ENCODE measurements at regions of chr7 and their contacts with region 1.

Region 1: DNA sequence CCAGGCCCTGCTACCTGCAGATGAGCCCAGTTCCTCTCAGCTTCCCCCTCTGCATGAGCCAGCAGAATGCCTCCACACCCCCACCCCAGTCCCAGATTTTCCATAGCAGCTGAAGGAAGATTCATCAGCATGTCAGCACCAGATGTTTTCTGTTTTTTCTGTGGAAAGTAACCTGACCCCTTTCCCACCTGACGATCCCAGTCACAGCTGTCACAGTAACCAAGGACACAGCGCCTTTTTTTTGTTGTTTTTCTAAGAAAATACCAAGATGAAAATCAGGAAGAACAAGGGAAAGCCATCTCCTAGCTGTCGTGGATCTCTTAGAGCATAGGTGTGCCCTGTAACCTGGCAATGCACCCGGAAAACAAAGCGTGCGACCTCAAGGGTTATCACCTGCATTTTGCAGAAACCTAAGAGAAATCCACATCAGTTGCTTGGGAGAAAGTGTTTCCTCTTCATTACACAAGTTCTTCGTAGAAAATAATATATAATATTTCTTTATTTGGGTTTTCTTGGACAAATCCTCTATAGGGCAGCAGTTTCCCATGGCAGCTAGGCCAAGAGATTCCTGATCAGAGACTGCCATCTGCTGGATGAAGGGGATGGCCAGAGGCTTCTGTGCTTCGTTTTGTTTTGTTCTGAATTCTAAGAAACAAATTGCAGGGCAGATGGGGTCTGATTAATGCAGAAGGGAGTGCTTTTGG is 401.9 kb downstream of the TNS3 start:
- DNase-seq: no peak
- ATAC-seq: peak; percentile 87
- H3K4me3 ChIP-seq: no peak overlapping the region
- H3K27ac ChIP-seq: no peak overlapping the region
- H3K4me1 ChIP-seq: no peaks in the 10 kb centered on the region
- H3K27me3 ChIP-seq: no peaks in the 10 kb centered on the region
- CTCF ChIP-seq: peak; percentile 55 to 80 (median 58)
- EP300 ChIP-seq: no peak
- POLR2A ChIP-seq: no peak
- RAD21 ChIP-seq: peak; percentile 71

Region 2: DNA sequence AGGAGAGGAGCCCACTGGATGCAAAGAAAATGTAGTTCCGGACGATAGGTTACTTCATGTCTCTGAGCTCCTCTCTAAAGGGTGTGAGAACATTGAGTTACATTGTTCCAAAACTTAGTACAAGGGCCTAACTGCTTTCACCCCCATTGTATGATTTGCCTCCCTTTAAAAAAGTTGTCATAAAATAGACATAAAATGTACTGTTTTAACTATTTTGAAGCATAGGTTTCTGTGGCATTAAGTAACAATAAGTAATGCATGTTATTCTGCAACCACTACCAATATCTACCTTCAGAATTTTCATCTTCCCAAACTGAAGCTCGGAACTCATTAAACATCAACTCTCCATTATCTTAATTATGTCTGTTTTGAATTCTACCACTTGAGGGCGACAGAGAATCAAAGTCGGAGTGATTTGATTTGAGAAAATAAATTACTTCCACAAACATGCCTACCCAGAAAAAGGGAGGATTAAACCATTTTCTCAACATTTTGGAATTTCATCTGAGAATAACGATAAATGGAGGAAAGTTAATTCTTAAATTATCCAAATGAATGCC is 1289.0 kb before region 1 on chr7:
- CTCF ChIA-PET with region 1: interaction called, 10 read pairs
- POLR2A ChIA-PET with region 1: no interaction called
- RAD21 ChIA-PET with region 1: interaction called, 3 read pairs
- SMC1A ChIA-PET with region 1: interaction called, 3 read pairs
- in situ Hi-C with region 1: no loop called
- intact Hi-C with region 1: loop called (anchors 2 kb)
- DNase-seq: no peak
- ATAC-seq: peak; percentile 31; the same call in 1 of the 3 replicates
- H3K4me3 ChIP-seq: no peak overlapping the region
- H3K27ac ChIP-seq: no peak overlapping the region
- H3K4me1 ChIP-seq: no peaks in the 10 kb centered on the region
- H3K27me3 ChIP-seq: peaks cover 0 to 14% of the 10 kb centered on the region in 2 experiments
- CTCF ChIP-seq: peak; percentile 23 to 62 (median 51); a peak in 5 of 6 replicates
- EP300 ChIP-seq: no peak
- POLR2A ChIP-seq: no peak
- RAD21 ChIP-seq: peak; percentile 65

Region 3: GRCh38 chr7:46945328-46945727 is 234.6 kb before region 1 on chr7:
- CTCF ChIA-PET with region 1: no interaction called
- POLR2A ChIA-PET with region 1: no interaction called
- RAD21 ChIA-PET with region 1: no interaction called
- SMC1A ChIA-PET with region 1: no interaction called
- in situ Hi-C with region 1: no loop called
- intact Hi-C with region 1: loop called (anchors 10 kb)
- DNase-seq: no peak
- ATAC-seq: no peak
- H3K4me3 ChIP-seq: no peak overlapping the region
- H3K27ac ChIP-seq: no peak overlapping the region
- H3K4me1 ChIP-seq: no peaks in the 10 kb centered on the region
- H3K27me3 ChIP-seq: no peaks in the 10 kb centered on the region
- CTCF ChIP-seq: no peak
- EP300 ChIP-seq: no peak
- POLR2A ChIP-seq: no peak
- RAD21 ChIP-seq: no peak

Region 4: GRCh38 chr7:47254081-47255006 is 74.4 kb after region 1 on chr7:
- CTCF ChIA-PET with region 1: interaction called, 10 read pairs
- POLR2A ChIA-PET with region 1: interaction called, 3 read pairs
- RAD21 ChIA-PET with region 1: no interaction called
- SMC1A ChIA-PET with region 1: no interaction called
- in situ Hi-C with region 1: no loop called
- intact Hi-C with region 1: loop called (anchors 5 kb)
- DNase-seq: no peak
- ATAC-seq: peak; percentile 97
- H3K4me3 ChIP-seq: peak overlapping the region; percentile 27; the same call in 1 of the 2 replicates
- H3K27ac ChIP-seq: no peak overlapping the region
- H3K4me1 ChIP-seq: no peaks in the 10 kb centered on the region
- H3K27me3 ChIP-seq: peaks cover 0 to 4% of the 10 kb centered on the region in 2 experiments; a peak in 2 of 4 replicates
- CTCF ChIP-seq: peak; percentile 63 to 78 (median 65); a peak in 5 of 6 replicates
- EP300 ChIP-seq: no peak
- POLR2A ChIP-seq: no peak
- RAD21 ChIP-seq: peak; percentile 38

Region 5: GRCh38 chr7:47266131-47266706 is 86.3 kb after region 1 on chr7:
- CTCF ChIA-PET with region 1: no interaction called
- POLR2A ChIA-PET with region 1: no interaction called
- RAD21 ChIA-PET with region 1: no interaction called
- SMC1A ChIA-PET with region 1: no interaction called
- in situ Hi-C with region 1: no loop called
- intact Hi-C with region 1: no loop called
- DNase-seq: peak; percentile 12
- ATAC-seq: peak; percentile 89
- H3K4me3 ChIP-seq: no peak overlapping the region
- H3K27ac ChIP-seq: no peak overlapping the region
- H3K4me1 ChIP-seq: no peaks in the 10 kb centered on the region
- H3K27me3 ChIP-seq: no peaks in the 10 kb centered on the region
- CTCF ChIP-seq: peak; percentile 87 to 92 (median 90)
- EP300 ChIP-seq: no peak
- POLR2A ChIP-seq: no peak
- RAD21 ChIP-seq: peak; percentile 97

Region 6: DNA sequence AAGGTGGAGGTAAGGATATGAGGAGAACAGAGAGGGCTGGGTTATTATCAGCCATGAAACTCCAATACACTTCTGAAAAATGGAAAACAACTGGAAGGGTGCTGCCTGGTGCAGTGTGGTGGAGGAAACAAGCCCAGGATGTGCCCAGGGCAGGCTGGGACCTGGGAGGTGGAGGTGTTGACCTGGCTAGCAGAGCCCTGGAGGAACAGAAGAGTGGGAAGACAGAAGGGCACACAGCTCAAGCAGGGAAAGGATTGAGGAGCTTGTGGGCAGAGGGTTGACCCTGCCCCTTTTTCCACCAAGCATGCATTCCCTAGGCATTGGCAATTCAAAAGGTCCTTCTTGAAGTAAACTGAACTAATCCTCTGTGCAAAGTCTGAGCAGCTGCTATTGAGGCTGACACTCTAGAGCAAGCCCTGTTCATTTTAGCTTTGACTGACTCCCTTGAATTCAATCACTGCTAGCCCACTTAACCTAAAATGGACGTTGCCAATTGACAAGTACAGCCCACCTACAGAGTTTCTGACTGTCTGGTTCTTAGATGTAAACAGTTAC is 518.3 kb after region 1 on chr7:
- CTCF ChIA-PET with region 1: no interaction called
- POLR2A ChIA-PET with region 1: no interaction called
- RAD21 ChIA-PET with region 1: no interaction called
- SMC1A ChIA-PET with region 1: no interaction called
- in situ Hi-C with region 1: no loop called
- intact Hi-C with region 1: no loop called
- DNase-seq: no peak
- ATAC-seq: no peak
- H3K4me3 ChIP-seq: no peak overlapping the region
- H3K27ac ChIP-seq: no peak overlapping the region
- H3K4me1 ChIP-seq: no peaks in the 10 kb centered on the region
- H3K27me3 ChIP-seq: no peaks in the 10 kb centered on the region
- CTCF ChIP-seq: no peak
- EP300 ChIP-seq: no peak
- POLR2A ChIP-seq: no peak
- RAD21 ChIP-seq: no peak

Region 7: GRCh38 chr7:47738563-47739166 is 558.7 kb after region 1 on chr7:
- CTCF ChIA-PET with region 1: no interaction called
- POLR2A ChIA-PET with region 1: no interaction called
- RAD21 ChIA-PET with region 1: no interaction called
- SMC1A ChIA-PET with region 1: no interaction called
- in situ Hi-C with region 1: no loop called
- intact Hi-C with region 1: no loop called
- DNase-seq: no peak
- ATAC-seq: peak; percentile 44; the same call in 2 of the 3 replicates
- H3K4me3 ChIP-seq: no peak overlapping the region
- H3K27ac ChIP-seq: no peak overlapping the region
- H3K4me1 ChIP-seq: no peaks in the 10 kb centered on the region
- H3K27me3 ChIP-seq: peaks cover 0 to 8% of the 10 kb centered on the region in 2 experiments; a peak in 2 of 4 replicates
- CTCF ChIP-seq: no peak
- EP300 ChIP-seq: no peak
- POLR2A ChIP-seq: no peak
- RAD21 ChIP-seq: no peak